ENCODE measurements at regions of chr20 and their contacts with region 1.

Region 1: GRCh38 chr20:45138561-45139300 is 14.5 kb upstream of the WFDC12 start:
- DNase-seq: peak; percentile 43
- H3K4me3 ChIP-seq: no peak overlapping the region
- H3K27ac ChIP-seq: no peak overlapping the region
- H3K4me1 ChIP-seq: no peaks in the 10 kb centered on the region
- H3K27me3 ChIP-seq: peaks cover 15% of the 10 kb centered on the region

Region 2: DNA sequence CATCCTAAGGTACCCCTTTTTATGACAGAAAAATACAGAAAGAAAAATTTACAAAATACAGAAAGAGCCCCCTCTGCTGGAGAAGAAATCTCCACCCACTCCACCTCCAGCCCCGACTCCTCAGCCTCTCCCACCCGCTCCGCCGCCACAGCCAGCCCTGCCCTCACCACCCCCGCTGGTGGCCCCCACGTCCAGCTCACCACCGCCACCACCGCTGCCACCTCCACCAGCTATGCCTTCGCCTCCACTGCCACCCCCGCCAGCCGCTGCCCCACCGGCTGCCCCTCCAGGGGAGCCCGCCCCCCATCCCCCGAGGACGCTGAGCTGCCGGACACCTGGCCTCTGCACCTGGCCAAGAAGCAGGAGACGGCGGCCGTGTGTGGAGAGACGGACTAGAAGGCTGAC is 348.5 kb after region 1 on chr20:
- in situ Hi-C with region 1: loop called (anchors 25 kb)
- DNase-seq: no peak
- H3K4me3 ChIP-seq: no peak overlapping the region
- H3K27ac ChIP-seq: no peak overlapping the region
- H3K4me1 ChIP-seq: 0 out of 2 replicates have a peak, but pooled peaks cover 2% of the 10 kb centered on the region
- H3K27me3 ChIP-seq: peaks cover 43% of the 10 kb centered on the region

Measured in GM23248 (cell line).